ENCODE measurements at regions of chr19 and their contacts with region 1.

Region 1: DNA sequence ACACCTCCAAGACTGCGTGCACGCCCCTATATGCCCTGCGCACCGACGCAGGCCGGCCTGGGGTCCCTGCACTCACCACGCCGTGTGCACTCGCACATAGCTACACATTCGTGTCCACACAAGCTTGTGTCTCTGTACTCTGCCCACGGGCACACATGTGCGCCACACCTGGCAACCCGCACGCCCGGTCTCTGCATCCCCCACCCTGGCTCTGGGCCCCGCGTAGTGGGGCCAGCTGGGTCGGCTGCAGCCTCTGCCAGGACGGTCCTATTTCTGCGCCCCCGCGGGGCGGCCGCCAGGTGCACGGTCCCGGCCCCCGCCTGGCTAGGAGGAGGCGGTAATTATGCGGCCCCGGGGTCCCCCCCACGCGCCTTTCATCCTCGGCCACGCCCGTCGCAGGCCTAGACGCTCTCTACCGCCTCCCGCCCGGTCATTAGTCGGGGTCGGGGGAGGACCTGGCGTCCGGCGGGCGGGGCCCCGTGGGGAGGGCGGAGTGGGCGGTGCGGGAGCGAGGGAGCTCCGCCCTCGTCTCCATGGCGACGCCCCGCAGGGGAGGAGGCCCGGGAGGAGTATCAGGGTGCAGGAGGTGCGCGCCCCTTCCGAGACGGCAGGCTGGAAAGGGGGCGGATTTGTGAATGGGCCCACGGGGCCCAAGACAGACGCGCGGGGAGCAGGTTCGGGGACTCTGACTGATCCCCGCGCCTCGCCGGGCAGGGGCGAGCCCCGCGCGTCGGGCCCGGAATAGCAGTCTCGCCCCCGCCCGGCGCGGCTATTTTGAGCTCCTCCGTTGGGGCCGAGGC is 2.8 kb upstream of the CIRBP start:
- DNase-seq: peak; percentile 71 to 93 (median 88)
- ATAC-seq: peak; percentile 11 to 34 (median 24)
- H3K4me3 ChIP-seq: peak overlapping the region; percentile 13 to 53 (median 32)
- H3K27ac ChIP-seq: peak overlapping the region; percentile 57 to 75 (median 68)
- H3K4me1 ChIP-seq: peaks cover 43 to 61% (median 43%) of the 10 kb centered on the region in 3 donors
- H3K27me3 ChIP-seq: no peaks in the 10 kb centered on the region
- CTCF ChIP-seq: no peak

Region 2: DNA sequence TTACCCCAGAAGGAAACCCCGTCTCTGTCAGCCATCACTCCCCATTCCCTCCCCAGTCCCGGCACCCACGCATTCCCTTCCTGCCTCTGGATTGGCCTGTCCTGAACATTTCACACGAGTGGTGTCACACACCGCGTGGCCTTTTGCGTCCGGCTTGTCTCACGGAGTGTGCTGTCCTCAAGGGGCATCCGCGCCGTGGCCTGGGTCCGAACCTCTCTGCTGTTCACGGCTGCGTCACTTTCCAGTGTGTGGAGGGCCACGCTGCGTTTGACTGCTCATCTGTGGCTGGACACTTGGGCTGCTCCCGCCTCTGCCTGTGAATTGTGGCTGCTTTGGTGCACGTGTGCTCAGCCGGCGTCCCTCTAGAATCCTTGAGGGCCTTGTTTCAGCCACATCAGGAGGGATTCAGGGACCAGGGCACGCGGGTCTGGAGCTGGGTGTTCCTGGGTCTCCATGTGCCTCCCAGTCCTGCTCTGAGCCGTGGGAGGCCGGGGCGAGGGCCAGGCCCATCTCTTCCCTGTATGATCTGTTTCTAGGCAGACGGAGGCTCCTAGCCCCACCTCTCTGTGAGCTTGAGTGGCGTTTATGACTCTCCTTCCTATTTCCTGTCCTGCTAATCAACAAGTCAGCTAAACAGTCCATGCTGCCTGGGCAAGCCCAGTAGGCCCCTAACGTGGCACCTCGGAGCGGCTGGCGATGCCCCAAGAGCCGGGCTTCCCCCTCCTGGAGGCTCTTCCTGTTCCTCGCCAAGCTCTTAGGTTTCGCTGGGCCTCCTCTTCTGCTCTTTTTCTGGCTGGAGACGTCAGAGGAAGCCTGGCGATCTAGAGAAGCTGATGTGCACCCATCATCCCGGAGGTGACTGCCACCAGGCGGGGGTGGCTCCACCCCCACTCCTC is 52.7 kb before region 1 on chr19:
- intact Hi-C with region 1: no loop called
- DNase-seq: peak in 3 of 6 donors; percentile 61 to 77 (median 61)
- ATAC-seq: peak in 3 of 4 donors; percentile 25 to 65 (median 31)
- H3K4me3 ChIP-seq: no peak overlapping the region
- H3K27ac ChIP-seq: peak overlapping the region; percentile 36 to 88 (median 71)
- H3K4me1 ChIP-seq: peaks cover 27 to 49% (median 42%) of the 10 kb centered on the region in 3 donors
- H3K27me3 ChIP-seq: no peaks in the 10 kb centered on the region
- CTCF ChIP-seq: no peak

Region 3: GRCh38 chr19:1243761-1244692 is 22.3 kb before region 1 on chr19:
- intact Hi-C with region 1: loop called in 1 of 3 experiments (anchors 2 kb)
- DNase-seq: peak; percentile 84 to 93 (median 88)
- ATAC-seq: peak; percentile 38 to 65 (median 61)
- H3K4me3 ChIP-seq: peak overlapping the region in 2 of 4 donors; percentile 4 to 23
- H3K27ac ChIP-seq: peak overlapping the region; percentile 49 to 79 (median 67)
- H3K4me1 ChIP-seq: peaks cover 49 to 58% (median 53%) of the 10 kb centered on the region in 3 donors
- H3K27me3 ChIP-seq: no peaks in the 10 kb centered on the region
- CTCF ChIP-seq: peak; percentile 86 to 95 (median 92)